ENCODE measurements at regions of chr11 and their contacts with region 1.

Region 1: DNA sequence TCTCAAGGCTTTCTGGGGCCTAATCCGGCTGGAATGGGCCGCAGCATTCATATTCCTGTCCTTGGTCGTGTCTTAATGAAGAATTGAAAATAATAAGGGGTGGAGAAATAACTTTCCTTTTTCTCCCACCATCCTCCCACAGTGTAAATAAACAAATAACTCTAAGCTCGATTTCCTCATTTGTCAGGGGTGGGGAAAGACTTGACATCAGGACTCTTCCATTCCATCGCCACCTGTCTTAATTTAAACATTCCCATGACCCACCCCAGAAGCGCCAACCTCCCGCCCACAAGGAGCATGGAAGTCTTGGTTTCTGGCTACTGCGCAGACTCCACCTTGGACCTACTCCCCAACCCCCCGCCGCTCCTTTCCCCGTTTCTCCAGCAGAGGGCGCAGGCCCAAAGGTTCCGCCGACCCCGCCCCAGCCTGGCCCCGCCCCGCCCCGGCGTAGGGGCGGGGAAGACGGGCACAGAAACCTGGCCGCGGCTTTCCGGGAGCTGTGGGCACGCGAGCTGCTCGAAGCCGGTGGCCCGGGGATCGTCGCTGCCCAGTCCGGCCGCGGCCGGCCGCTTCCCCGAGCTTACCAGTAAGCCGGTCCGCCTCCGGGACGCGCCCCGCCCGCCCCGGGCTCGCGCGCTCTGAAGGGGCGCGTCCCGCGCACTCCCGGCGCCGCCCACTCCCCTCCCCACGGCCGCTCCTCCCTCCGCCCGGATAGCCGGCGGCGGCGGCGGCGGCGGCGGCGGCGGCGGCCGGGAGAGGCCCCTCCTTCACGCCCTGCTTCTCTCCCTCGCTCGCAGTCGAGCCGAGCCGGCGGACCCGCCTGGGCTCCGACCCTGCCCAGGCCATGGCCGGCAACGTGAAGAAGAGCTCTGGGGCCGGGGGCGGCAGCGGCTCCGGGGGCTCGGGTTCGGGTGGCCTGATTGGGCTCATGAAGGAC is at the start of gene CBL:
- DNase-seq: peak; percentile 31
- H3K4me3 ChIP-seq: peak within 1 kb of the TSS; percentile 98
- H3K27me3 ChIP-seq: no peaks in the 10 kb centered on the region
- CTCF ChIP-seq: peak; percentile 98
- polyA plus RNA-seq, gene CBL: 9.3 and 11.4 TPM in 2 replicates

Region 2: DNA sequence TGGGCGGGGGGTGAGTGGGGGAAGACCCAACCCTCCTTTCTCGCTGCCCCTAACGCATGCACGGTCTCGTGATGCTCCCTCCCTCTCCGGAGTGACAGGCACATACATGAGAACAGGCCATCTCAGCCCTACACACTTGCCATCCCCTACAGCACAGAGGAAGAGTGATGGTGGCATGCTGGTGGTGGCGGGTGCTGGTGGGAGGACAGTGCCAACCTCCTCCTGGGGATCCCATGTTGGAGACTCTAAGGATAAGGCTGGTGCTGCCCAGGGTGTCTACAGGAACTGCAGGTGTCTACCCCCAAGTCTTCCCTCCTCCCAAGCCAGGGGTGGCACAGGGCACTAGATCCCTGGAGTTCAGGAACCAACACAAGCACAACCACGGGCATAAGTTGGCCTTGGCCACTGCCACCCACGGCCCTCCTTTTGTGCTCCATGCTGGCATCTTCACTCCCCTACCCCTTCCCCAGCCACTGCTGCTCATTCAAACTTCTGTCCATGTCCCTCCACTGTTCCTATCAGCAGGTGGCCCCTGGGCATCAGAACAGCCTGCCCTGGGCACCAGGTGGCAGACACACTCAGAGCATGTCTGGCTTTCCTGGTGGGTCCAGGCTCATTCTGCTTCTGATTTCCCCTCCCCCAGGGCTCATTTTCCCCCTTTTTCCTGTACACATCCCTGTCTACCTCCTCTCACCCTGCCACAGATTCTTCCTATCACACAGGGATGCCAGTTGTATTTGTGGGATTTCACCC is 43.8 kb before region 1 on chr11:
- CTCF ChIA-PET with region 1: no interaction called
- POLR2A ChIA-PET with region 1: no interaction called
- DNase-seq: no peak
- H3K4me3 ChIP-seq: no peak overlapping the region
- H3K27me3 ChIP-seq: no peaks in the 10 kb centered on the region
- CTCF ChIP-seq: no peak

Region 3: DNA sequence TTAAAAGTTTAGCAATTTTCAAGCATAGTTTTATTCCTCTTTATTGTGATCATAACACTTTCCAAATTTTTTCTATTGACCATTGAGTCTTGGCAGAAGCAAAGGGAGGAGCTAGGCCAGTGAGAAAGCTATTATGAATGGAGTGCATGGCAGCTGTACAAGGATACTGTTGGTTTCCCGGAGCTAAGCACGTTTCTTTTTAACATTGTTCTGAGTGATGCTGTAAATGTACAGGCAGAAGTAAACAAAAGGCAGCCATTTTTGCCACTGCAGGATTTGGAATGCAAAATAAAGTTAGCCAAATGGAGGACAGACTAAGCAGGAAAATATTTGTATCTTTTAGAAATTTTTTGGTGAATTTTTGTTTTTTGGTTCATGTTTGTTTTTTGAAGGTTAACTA is 16.5 kb after region 1 on chr11:
- CTCF ChIA-PET with region 1: interaction called, 10 read pairs
- POLR2A ChIA-PET with region 1: interaction called, 8 read pairs
- DNase-seq: peak; percentile 31
- H3K4me3 ChIP-seq: no peak overlapping the region
- H3K27me3 ChIP-seq: no peaks in the 10 kb centered on the region
- CTCF ChIP-seq: no peak

Region 4: GRCh38 chr11:119273721-119274120 is 67.9 kb after region 1 on chr11:
- CTCF ChIA-PET with region 1: interaction called, 10 read pairs
- POLR2A ChIA-PET with region 1: no interaction called
- DNase-seq: no peak
- H3K4me3 ChIP-seq: no peak overlapping the region
- H3K27me3 ChIP-seq: no peaks in the 10 kb centered on the region
- CTCF ChIP-seq: no peak

Region 5: GRCh38 chr11:119284344-119285157 is 78.7 kb after region 1 on chr11:
- CTCF ChIA-PET with region 1: interaction called, 17 read pairs
- POLR2A ChIA-PET with region 1: no interaction called
- DNase-seq: no peak
- H3K4me3 ChIP-seq: no peak overlapping the region
- H3K27me3 ChIP-seq: no peaks in the 10 kb centered on the region
- CTCF ChIP-seq: peak; percentile 55

Region 6: GRCh38 chr11:119323538-119324033 is 117.7 kb after region 1 on chr11:
- CTCF ChIA-PET with region 1: interaction called, 30 read pairs
- POLR2A ChIA-PET with region 1: no interaction called
- DNase-seq: no peak
- H3K4me3 ChIP-seq: no peak overlapping the region
- H3K27me3 ChIP-seq: no peaks in the 10 kb centered on the region
- CTCF ChIP-seq: peak; percentile 81

Measured in BJ (cell line).